PC-3 (cell line): ENCODE measurements at regions of chr12 and their contacts with region 1.

Region 1: DNA sequence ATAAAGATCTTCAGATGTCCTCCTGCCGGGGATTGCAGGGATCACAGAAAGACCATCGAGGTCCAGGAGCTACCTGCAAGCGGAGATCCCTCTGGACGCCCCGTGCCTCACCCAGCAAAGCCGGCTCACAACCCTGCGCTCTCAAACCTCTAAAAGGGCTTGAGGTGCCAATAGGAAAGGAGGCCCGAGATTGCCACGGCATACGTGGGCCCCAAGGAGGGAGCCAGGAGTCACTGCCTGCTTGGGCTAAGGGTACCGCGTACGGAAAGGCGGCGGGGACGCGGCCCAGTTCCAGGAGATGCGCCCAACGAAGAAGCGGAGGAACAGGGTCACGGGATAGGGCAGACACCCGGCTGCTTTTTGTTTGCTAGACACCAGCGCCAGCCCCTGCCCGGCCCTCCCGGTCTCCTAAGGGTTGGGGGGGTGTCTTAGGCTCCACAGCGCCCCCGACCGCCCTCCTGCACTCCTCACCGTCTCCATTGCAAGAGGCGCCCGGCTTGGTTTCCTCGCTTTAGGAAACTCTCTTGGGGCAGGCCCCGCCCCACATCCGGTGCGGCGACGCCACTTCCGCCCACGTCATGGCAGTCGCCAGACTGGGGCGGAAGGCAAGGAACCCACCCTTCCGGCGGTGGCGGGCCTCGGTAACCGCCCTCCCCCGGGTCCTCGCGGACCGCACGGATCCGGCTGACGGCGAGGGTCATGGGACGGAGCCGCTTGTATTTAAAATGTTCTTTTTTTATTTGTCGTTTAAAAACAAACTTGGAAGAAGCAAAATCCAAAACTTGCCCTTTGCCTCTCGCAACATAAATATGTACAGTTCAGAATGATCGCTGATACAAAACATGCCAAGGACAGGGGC is at the start of gene PRKAG1:
- DNase-seq: peak; percentile 97
- ATAC-seq: peak; percentile 90
- H3K4me3 ChIP-seq: peak within 1 kb of the TSS; percentile 93
- H3K27ac ChIP-seq: peak within 1 kb of the TSS; percentile 81
- H3K4me1 ChIP-seq: peaks cover 18% of the 10 kb centered on the region
- H3K27me3 ChIP-seq: no peaks in the 10 kb centered on the region
- CTCF ChIP-seq: peak; percentile 58
- total RNA-seq, gene PRKAG1: 62.1 and 66.5 TPM in 2 replicates

Region 2: GRCh38 chr12:48957141-48958048 is 61.1 kb before region 1 on chr12 and contains the start of gene ARF3:
- CTCF ChIA-PET with region 1: interaction called, 5 read pairs
- POLR2A ChIA-PET with region 1: interaction called, 14 read pairs
- intact Hi-C with region 1: no loop called
- DNase-seq: peak; percentile 96
- ATAC-seq: peak; percentile 85
- H3K4me3 ChIP-seq: peak within 1 kb of the TSS; percentile 96
- H3K27ac ChIP-seq: peak within 1 kb of the TSS; percentile 61
- H3K4me1 ChIP-seq: peaks cover 29% of the 10 kb centered on the region
- H3K27me3 ChIP-seq: no peaks in the 10 kb centered on the region
- CTCF ChIP-seq: no peak
- total RNA-seq, gene ARF3: 85.5 and 93.0 TPM in 2 replicates

Region 3: GRCh38 chr12:49366652-49367380 is 348.3 kb after region 1 on chr12:
- CTCF ChIA-PET with region 1: no interaction called
- POLR2A ChIA-PET with region 1: interaction called, 12 read pairs
- intact Hi-C with region 1: no loop called
- DNase-seq: peak; percentile 95
- ATAC-seq: peak; percentile 82
- H3K4me3 ChIP-seq: peak overlapping the region; percentile 85
- H3K27ac ChIP-seq: peak overlapping the region; percentile 82
- H3K4me1 ChIP-seq: peaks cover 37% of the 10 kb centered on the region
- H3K27me3 ChIP-seq: no peaks in the 10 kb centered on the region
- CTCF ChIP-seq: peak; percentile 16; the same call in 1 of the 2 replicates